AG04450 (cell line): ENCODE measurements at regions of chr16 and their contacts with region 1.

Region 1: DNA sequence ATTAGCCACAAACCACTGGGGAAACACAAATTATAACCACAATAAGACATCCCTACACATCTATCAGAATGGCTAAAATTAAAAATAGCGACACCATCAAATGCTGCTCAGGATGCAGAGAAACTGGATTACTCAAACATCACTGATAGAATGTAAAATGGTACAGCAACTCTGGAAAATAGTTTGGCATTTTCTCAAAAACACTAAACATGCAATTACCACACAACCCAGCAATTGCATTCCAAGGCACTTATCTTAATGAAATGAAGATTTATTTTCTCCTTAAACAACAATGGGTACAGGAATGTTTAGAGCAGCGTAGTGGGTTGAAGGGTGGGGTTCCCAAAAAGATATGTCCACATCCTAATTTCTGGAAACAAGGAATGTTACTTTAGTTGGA is 308.9 kb upstream of the PMFBP1 start:
- DNase-seq: no peak
- H3K4me3 ChIP-seq: no peak overlapping the region
- H3K27ac ChIP-seq: no peak overlapping the region
- H3K27me3 ChIP-seq: no peaks in the 10 kb centered on the region
- CTCF ChIP-seq: no peak

Region 2: GRCh38 chr16:72021043-72021442 is 459.9 kb before region 1 on chr16:
- CTCF ChIA-PET with region 1: no interaction called
- POLR2A ChIA-PET with region 1: no interaction called
- DNase-seq: no peak
- H3K4me3 ChIP-seq: no peak overlapping the region
- H3K27ac ChIP-seq: no peak overlapping the region
- H3K27me3 ChIP-seq: no peaks in the 10 kb centered on the region
- CTCF ChIP-seq: peak; percentile 47

Region 3: DNA sequence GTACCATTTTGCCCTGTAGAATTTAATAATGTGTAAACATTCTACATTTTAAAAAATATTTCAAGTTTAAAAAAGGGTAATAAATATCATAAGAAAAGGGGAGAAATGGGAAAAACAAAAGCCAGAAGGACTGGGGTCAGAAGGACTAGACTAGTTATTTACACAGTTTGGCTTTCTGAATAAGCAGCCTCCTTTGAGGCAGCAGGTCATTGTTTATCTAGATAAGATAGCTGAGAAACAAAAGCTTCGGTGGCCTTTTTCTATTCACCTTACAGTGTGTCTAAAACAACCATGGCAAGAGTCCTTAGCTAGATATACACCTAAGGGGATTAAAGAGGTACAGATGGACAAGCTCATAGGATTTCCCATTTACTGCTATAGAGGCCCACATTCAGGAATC is 87.6 kb after region 1 on chr16:
- CTCF ChIA-PET with region 1: no interaction called
- POLR2A ChIA-PET with region 1: no interaction called
- DNase-seq: no peak
- H3K4me3 ChIP-seq: no peak overlapping the region
- H3K27ac ChIP-seq: no peak overlapping the region
- H3K27me3 ChIP-seq: no peaks in the 10 kb centered on the region
- CTCF ChIP-seq: no peak

Region 4: GRCh38 chr16:72824027-72824426 is 343.1 kb after region 1 on chr16:
- CTCF ChIA-PET with region 1: interaction called, 16 read pairs
- POLR2A ChIA-PET with region 1: no interaction called
- DNase-seq: no peak
- H3K4me3 ChIP-seq: no peak overlapping the region
- H3K27ac ChIP-seq: no peak overlapping the region
- H3K27me3 ChIP-seq: no peaks in the 10 kb centered on the region
- CTCF ChIP-seq: no peak